H1 (cell line): ENCODE measurements at regions of chr12 and their contacts with region 1.

Region 1: GRCh38 chr12:129069886-129070285 is 216.6 kb downstream of the GLT1D1 start:
- DNase-seq: peak in 1 of 2 experiments; percentile 79
- H3K4me3 ChIP-seq: no peak overlapping the region
- H3K27ac ChIP-seq: no peak overlapping the region
- H3K4me1 ChIP-seq: peaks cover 0 to 3% (median 2%) of the 10 kb centered on the region in 4 experiments; a peak in 2 of 7 replicates
- H3K27me3 ChIP-seq: no peaks in the 10 kb centered on the region; a peak in 2 of 7 replicates
- CTCF ChIP-seq: peak; percentile 54 to 87 (median 66)
- EP300 ChIP-seq: no peak
- POLR2A ChIP-seq: no peak
- RAD21 ChIP-seq: peak; percentile 69 to 73

Region 2: DNA sequence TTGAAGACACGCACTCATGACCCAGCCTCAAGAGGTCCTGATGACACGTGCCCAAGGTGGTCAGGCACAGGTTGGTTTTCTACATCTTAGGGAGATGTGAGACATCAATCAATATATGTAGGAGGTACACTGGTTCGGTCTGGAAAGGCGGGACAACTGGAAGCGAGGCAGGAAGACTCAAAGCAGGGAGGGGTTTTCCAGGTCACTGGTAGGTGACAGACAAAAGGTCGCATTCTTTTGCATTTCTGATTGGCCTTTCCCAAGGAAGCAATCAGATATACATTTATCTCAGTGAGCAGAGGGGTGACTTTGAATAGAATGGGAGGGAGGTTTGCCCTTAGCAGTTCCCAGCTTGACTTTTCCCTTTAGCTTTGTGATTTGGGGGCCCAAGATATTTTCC is 178.0 kb before region 1 on chr12:
- CTCF ChIA-PET with region 1: no interaction called
- POLR2A ChIA-PET with region 1: no interaction called
- DNase-seq: no peak
- H3K4me3 ChIP-seq: no peak overlapping the region
- H3K27ac ChIP-seq: no peak overlapping the region
- H3K4me1 ChIP-seq: peaks cover 0 to 4% (median 2%) of the 10 kb centered on the region in 4 experiments; a peak in 1 of 7 replicates
- H3K27me3 ChIP-seq: no peaks in the 10 kb centered on the region
- CTCF ChIP-seq: no peak
- EP300 ChIP-seq: no peak
- POLR2A ChIP-seq: no peak
- RAD21 ChIP-seq: no peak

Region 3: GRCh38 chr12:129083121-129083840 is 13.4 kb after region 1 on chr12:
- CTCF ChIA-PET with region 1: interaction called, 31 read pairs
- POLR2A ChIA-PET with region 1: no interaction called
- DNase-seq: no peak
- H3K4me3 ChIP-seq: no peak overlapping the region
- H3K27ac ChIP-seq: no peak overlapping the region
- H3K4me1 ChIP-seq: no peaks in the 10 kb centered on the region
- H3K27me3 ChIP-seq: no peaks in the 10 kb centered on the region
- CTCF ChIP-seq: no peak
- EP300 ChIP-seq: no peak
- POLR2A ChIP-seq: no peak
- RAD21 ChIP-seq: no peak

Region 4: GRCh38 chr12:129169928-129170327 is 100.0 kb after region 1 on chr12:
- CTCF ChIA-PET with region 1: interaction called, 11 read pairs
- POLR2A ChIA-PET with region 1: no interaction called
- DNase-seq: no peak
- H3K4me3 ChIP-seq: no peak overlapping the region
- H3K27ac ChIP-seq: no peak overlapping the region
- H3K4me1 ChIP-seq: no peaks in the 10 kb centered on the region
- H3K27me3 ChIP-seq: no peaks in the 10 kb centered on the region
- CTCF ChIP-seq: no peak
- EP300 ChIP-seq: no peak
- POLR2A ChIP-seq: no peak
- RAD21 ChIP-seq: no peak